ENCODE measurements at regions of chr11 and their contacts with region 1.

Region 1: GRCh38 chr11:73307323-73308002 is 613 bp upstream of the ARHGEF17 start:
- DNase-seq: peak; percentile 99
- ATAC-seq: peak; percentile 85
- H3K4me3 ChIP-seq: peak overlapping the region; percentile 86
- H3K27ac ChIP-seq: peak overlapping the region; percentile 72
- H3K4me1 ChIP-seq: peaks cover 9% of the 10 kb centered on the region
- H3K27me3 ChIP-seq: no peaks in the 10 kb centered on the region
- CTCF ChIP-seq: peak; percentile 97

Region 2: DNA sequence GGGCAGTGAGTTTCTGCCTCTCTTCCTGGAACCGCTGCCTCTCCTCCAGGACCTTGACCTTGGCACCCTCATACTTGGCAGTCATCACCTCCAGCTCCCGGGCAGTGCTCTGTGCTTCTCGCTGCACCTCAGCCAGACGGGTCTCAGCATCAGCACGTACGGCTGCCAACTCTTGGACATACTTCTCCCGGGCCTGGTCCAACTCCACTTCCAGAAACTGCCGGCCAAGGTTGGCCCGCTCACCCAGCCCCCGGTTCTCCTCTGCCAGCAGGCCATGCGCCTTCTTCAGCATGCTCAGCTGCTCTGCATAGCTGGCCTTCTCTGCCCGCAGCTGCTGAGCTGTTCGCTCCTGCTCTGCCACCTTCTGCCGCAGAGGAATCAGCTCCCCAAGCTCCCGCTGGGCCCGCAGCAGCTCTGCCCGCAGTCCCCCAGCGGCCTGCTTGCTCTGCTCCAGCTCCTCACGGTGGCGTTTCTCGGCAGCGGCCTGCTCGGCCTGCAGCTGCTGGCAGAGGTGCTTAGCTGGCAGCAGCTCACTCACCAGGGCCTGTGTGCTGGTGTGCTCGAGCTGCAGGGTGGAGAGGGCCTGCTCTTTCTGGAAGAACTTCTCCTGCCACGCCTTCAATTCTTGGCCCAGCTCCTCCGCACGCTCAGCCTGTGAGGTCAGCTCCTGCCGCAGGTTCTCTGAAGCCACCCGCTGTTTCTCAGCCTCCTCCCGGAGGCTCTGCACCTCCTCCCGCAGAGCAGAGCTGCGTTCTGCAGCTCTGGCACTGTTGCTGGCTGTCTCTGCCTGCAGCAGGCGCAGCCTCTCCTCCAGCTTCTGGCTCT is 1294.4 kb before region 1 on chr11:
- CTCF ChIA-PET with region 1: no interaction called
- POLR2A ChIA-PET with region 1: interaction called, 14 read pairs
- intact Hi-C with region 1: no loop called
- DNase-seq: peak; percentile 39
- ATAC-seq: peak; percentile 75
- H3K4me3 ChIP-seq: no peak overlapping the region
- H3K27ac ChIP-seq: no peak overlapping the region
- H3K4me1 ChIP-seq: no peaks in the 10 kb centered on the region
- H3K27me3 ChIP-seq: no peaks in the 10 kb centered on the region
- CTCF ChIP-seq: no peak

Region 3: GRCh38 chr11:73184953-73185671 is 122.4 kb before region 1 on chr11:
- CTCF ChIA-PET with region 1: no interaction called
- POLR2A ChIA-PET with region 1: interaction called, 14 read pairs
- intact Hi-C with region 1: loop called (anchors 5 kb)
- DNase-seq: peak; percentile 95
- ATAC-seq: peak; percentile 57
- H3K4me3 ChIP-seq: peak overlapping the region; percentile 44
- H3K27ac ChIP-seq: peak overlapping the region; percentile 95
- H3K4me1 ChIP-seq: peaks cover 43% of the 10 kb centered on the region
- H3K27me3 ChIP-seq: no peaks in the 10 kb centered on the region
- CTCF ChIP-seq: peak; percentile 98

Region 4: DNA sequence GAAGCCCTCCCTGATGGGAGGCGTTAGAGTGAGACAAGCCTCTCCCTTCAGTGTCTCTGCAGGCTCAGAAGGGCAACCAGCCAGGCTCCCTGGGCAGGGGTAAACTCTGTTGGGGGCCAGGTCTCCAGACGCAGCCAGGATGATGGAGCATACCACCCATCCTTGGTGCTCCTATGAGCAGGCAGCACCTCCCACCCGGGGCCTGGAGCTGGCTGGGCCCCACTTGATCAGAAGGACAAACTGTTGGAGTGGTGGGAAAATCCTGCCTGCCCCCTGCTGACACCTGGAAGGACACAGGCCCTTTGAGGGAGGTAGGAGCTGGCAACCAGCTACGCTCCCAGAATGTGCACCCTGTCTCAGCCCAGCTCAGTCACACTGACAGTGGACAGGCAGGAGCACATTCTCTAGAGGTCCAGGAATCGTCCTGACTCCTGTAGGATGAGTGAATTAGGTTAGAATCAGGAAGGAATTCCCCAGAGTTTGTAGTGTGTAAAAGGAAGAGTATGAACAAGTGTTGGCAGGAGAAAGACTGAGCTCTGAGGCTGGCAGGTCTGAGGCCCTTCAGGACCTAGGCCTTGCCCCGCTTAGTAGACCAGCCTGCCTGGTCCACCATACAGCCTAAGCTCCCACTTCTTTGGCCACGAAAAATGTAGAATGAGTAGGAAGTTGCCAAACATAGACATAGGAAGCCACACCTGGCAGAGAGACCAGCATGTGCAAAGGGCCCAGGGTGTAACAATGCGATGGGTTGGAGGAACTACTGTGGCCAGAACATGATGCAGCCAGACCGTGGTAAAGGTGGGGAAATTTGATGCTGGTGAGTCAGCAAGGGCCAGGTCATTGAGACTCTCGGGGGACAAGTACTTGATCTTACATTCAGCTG is 19.7 kb after region 1 on chr11:
- CTCF ChIA-PET with region 1: interaction called, 11 read pairs
- POLR2A ChIA-PET with region 1: no interaction called
- intact Hi-C with region 1: loop called (anchors 1 kb)
- DNase-seq: peak; percentile 71
- ATAC-seq: peak; percentile 56
- H3K4me3 ChIP-seq: no peak overlapping the region
- H3K27ac ChIP-seq: no peak overlapping the region
- H3K4me1 ChIP-seq: peaks cover 10% of the 10 kb centered on the region; the same call in 1 of the 2 replicates
- H3K27me3 ChIP-seq: no peaks in the 10 kb centered on the region
- CTCF ChIP-seq: no peak

Region 5: DNA sequence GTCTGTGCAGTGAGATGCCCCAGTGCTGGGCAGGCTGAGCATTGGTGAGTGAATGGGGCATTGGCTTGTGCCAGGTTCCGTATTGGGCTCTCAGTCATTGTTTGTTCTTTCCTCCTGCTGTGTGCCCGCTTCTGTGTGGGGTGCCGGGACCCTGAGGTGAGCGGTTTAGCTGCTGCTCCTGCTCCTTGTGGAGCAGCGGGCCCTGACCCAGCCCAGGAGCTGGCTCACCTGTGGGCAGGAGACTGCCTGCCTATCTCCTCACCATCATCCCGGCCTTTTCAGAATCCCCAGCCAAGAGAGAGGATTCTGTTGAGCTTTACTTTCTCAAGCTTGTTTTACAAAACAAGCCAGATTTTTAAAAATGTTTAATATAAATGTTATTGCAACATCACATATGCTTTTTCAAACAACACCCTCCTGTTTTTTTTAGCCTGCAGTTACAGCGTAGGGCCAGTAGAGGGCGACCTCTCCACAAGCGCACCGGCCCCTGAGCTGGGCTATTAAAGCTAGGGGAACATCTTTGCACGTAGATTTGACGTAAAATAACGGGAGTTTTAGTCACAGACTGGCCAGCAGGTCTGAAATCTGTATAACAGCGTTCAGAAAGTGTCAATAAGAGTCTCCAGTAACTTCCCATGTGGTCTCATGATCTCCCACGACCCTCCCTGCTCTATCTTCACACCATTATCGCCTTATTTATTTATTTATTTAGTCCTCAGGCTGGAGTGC is 43.6 kb after region 1 on chr11:
- CTCF ChIA-PET with region 1: interaction called, 10 read pairs
- POLR2A ChIA-PET with region 1: interaction called, 4 read pairs
- intact Hi-C with region 1: no loop called
- DNase-seq: peak; percentile 81
- ATAC-seq: peak; percentile 79
- H3K4me3 ChIP-seq: peak overlapping the region; percentile 18; the same call in 1 of the 2 replicates
- H3K27ac ChIP-seq: no peak overlapping the region
- H3K4me1 ChIP-seq: no peaks in the 10 kb centered on the region
- H3K27me3 ChIP-seq: no peaks in the 10 kb centered on the region
- CTCF ChIP-seq: peak; percentile 99

Region 6: DNA sequence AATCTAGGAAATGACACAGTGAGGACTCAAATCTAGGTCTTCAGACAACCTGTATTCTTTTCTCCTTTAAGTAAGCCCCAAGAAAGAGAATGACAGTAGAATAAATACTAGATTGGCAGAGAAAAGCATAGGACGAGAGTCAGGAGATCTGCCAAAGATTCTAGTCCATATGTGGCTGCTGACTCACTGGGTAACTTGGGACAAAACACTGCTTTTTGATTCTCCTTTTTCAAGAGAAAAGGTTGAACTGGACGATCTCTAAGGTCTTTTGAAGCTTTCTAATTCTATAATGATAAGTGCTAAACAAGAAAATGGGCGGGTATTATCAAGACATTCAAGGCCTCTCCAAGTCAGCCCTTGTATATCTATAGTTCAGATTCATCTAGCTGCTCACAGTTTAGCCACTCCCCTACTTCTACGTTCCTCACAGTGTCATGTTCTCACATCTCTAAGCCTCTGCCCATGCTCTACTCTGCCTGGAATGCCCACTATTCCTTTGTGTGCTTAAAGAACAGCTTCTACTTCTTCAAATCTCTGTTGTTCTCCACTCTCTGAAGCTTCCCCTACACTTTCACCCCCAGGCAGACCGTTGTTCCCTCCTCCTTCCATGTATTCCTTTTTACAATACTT is 121.8 kb after region 1 on chr11:
- CTCF ChIA-PET with region 1: no interaction called
- POLR2A ChIA-PET with region 1: interaction called, 13 read pairs
- intact Hi-C with region 1: no loop called
- DNase-seq: peak; percentile 68
- ATAC-seq: peak; percentile 84
- H3K4me3 ChIP-seq: no peak overlapping the region
- H3K27ac ChIP-seq: peak overlapping the region; percentile 41
- H3K4me1 ChIP-seq: peaks cover 22% of the 10 kb centered on the region
- H3K27me3 ChIP-seq: no peaks in the 10 kb centered on the region
- CTCF ChIP-seq: no peak

Measured in PC-3 (cell line).